Right ventricle myocardium inferior (tissue), 1 donor: ENCODE measurements at regions of chr1 and their contacts with region 1.

Region 1: GRCh38 chr1:205321164-205321958 is at the start of gene NUAK2:
- DNase-seq: peak; percentile 98
- ATAC-seq: peak; percentile 93
- total RNA-seq, gene NUAK2: 1.1 TPM

Region 2: GRCh38 chr1:205273551-205273982 is 47.8 kb before region 1 on chr1:
- intact Hi-C with region 1: loop called (anchors 1 kb)
- DNase-seq: peak; percentile 86
- ATAC-seq: peak; percentile 83